ENCODE measurements at regions of chr7 and their contacts with region 1.

Region 1: DNA sequence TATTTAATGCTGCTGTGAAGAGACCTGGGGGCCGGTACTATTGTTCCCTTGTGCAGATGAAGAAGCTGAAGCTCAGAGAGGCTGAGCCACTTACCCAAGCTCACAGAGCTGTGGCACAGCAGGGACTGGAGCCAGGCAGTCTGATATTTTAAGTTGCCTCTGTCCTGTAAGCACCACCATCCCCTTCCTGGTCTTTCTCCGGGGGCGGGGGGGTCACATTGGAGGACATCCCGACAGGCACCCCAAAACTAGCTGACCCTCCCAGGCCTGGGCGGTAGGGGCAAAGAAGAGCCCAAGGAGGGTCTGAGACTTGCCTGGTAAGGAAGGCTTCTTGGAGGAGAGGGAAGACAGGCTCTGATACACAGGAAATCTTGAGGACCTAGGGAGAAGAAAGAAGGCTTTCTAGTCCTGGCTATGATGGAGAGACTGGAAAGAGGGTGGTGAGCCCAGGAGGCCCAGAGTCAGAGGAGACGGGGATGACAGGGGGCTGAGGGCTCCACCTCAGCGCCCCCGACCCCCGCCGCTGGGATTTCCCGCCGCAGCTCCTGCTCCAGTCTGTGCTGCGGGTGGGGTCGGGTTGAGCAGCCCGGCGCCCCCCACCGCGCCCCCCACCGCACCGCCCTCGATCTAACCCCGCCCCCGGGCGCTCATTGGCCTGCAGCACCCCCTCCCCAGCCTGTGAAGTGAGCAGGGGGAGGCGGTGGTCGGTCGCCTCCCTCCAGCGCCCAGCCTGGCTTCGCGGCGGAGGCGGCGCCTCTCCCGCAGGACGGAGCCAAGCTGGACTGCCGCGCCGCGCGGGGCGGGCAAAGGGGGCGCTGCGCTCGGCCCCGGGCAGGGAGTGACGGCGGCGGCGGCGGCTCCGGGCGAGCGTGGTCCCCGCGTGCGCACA is at the start of gene ADCYAP1R1:
- DNase-seq: peak; percentile 68
- ATAC-seq: peak; percentile 86
- H3K4me3 Mint-ChIP-seq: peak within 1 kb of the TSS; percentile 76
- H3K27ac Mint-ChIP-seq: no peak within 1 kb of the TSS
- H3K4me1 Mint-ChIP-seq: peaks cover 26% of the 10 kb centered on the region
- H3K27me3 Mint-ChIP-seq: peaks cover 43% of the 10 kb centered on the region
- CTCF ChIP-seq: no peak
- total RNA-seq, gene ADCYAP1R1: 8.7 to 9.9 TPM (median 9.8 TPM) in 3 replicates

Region 2: GRCh38 chr7:31027161-31027965 is 24.5 kb before region 1 on chr7:
- CTCF ChIA-PET with region 1: interaction called, 10 read pairs
- POLR2A ChIA-PET with region 1: no interaction called
- DNase-seq: peak; percentile 56
- ATAC-seq: peak; percentile 76
- H3K4me3 Mint-ChIP-seq: no peak overlapping the region
- H3K27ac Mint-ChIP-seq: no peak overlapping the region
- H3K4me1 Mint-ChIP-seq: peaks cover 30% of the 10 kb centered on the region
- H3K27me3 Mint-ChIP-seq: peaks cover 1% of the 10 kb centered on the region; the same call in 1 of the 2 replicates
- CTCF ChIP-seq: no peak

Measured in WTC11 (cell line).